ENCODE measurements at regions of chr18 and their contacts with region 1.

Region 1: DNA sequence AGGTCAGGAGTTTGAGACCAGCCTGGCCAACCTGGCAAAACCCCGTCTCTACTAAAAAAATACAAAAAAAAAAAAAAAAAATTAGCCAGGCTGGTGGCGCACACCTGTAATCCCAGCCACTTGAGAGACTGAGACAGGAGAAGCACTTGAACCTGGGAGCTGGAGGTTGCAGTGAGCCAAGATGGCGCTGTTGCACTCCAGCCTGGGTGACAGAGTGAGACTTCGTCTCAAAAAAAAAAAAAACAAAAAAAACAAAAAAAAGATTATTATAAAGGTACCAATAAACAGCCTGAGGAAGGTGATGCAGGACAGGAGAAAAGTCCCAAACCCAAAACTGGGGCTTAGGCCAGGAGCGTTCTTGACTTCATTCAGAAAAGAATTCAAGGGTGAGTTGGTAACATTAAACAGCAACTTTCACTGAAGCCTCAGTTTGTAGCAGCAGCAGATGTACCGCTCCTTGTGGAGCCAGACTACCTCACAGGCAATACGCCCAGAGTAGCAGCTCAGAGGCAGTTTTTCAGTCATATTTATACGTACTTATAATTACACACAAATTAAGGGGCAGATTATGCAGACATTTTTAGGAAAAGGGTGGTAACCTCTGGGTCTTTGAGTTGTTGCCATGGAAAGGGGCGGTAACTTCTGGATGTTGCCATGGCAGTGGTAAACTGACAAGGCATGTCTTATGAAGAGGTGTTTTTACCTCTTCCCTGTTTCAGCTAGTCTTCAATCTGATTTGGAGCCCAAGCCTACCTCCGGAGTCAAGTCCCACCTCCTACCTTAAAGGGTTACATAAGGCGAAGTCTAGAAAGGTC is 1596.6 kb upstream of the CELF4 start:
- DNase-seq: peak; percentile 24
- ATAC-seq: no peak
- H3K4me3 Mint-ChIP-seq: no peak overlapping the region
- H3K27ac Mint-ChIP-seq: no peak overlapping the region
- H3K4me1 Mint-ChIP-seq: peaks cover 20% of the 10 kb centered on the region
- H3K27me3 Mint-ChIP-seq: no peaks in the 10 kb centered on the region
- CTCF ChIP-seq: no peak

Region 2: DNA sequence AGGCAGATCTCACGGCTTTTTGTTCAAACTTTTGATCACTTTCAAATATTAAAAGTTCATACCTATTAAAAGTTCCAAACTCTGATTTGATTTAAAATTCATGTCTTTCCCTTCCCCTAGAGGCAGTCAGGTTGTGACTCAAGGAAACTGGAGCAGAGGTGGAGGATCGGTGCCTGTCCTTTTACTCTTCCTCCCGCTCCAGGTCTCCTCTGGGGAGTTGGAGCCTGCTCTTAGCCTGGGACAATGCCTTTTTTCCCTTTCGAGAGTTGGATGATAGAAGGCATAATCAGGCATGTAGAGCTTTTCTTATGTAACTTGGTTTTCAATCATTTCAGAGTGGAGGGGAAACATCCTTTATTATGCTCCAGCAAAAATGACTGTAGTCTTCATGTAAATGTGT is 109.4 kb after region 1 on chr18:
- CTCF ChIA-PET with region 1: no interaction called
- POLR2A ChIA-PET with region 1: interaction called, 10 read pairs
- DNase-seq: no peak
- ATAC-seq: peak; percentile 63
- H3K4me3 Mint-ChIP-seq: no peak overlapping the region
- H3K27ac Mint-ChIP-seq: no peak overlapping the region
- H3K4me1 Mint-ChIP-seq: peaks cover 24% of the 10 kb centered on the region
- H3K27me3 Mint-ChIP-seq: no peaks in the 10 kb centered on the region
- CTCF ChIP-seq: no peak